ENCODE measurements at regions of chr17 and their contacts with region 1.

Region 1: DNA sequence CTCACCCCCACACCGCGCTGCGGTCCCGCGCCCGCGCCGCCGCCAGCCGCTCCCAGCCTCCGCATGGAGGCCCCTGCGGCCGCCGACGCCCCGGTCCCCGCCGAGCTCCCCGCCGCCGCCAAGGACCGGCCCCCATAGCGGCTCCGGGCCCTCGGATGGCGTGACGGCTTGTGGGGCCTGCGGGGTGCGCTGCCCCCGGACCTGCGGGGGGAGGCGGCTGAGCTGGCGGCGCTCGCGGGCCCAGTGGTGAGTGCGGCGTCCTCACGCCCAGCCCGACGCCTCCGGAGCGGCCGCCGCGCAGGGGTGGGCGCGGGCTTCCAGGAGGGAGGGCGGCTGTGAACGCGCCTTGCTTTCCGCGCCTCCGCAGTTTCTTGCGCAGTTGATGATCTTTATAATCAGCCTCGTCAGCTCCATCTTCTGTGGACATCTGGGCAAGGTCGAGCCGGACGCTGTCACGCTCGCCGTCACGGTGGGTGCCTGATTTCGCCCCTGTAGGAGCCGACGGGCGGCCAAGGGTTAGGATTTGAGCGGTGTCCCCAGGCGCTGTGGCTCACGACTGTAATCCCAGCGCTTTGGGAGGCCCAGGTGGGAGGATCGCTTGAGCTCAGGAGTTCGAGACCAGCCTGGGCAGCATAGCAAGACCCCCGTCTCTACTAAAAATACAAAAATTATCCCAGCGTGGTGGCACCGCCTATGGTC is 46.4 kb downstream of the SLC47A1 start:
- DNase-seq: peak; percentile 29 to 72 (median 48)
- H3K4me3 ChIP-seq: peak overlapping the region; percentile 48
- H3K27ac ChIP-seq: peak overlapping the region; percentile 49 to 50
- H3K4me1 ChIP-seq: peaks cover 4% of the 10 kb centered on the region
- H3K27me3 ChIP-seq: no peaks in the 10 kb centered on the region
- CTCF ChIP-seq: no peak
- EP300 ChIP-seq: no peak
- POLR2A ChIP-seq: no peak

Region 2: GRCh38 chr17:19533718-19534561 is 46.1 kb before region 1 on chr17 and contains the start of gene SLC47A1:
- intact Hi-C with region 1: loop called in 1 of 4 experiments (anchors 5 kb)
- DNase-seq: peak in 1 of 5 donors; percentile 72
- H3K4me3 ChIP-seq: peak within 1 kb of the TSS; percentile 50
- H3K27ac ChIP-seq: no peak within 1 kb of the TSS
- H3K4me1 ChIP-seq: no peaks in the 10 kb centered on the region
- H3K27me3 ChIP-seq: no peaks in the 10 kb centered on the region
- CTCF ChIP-seq: no peak
- EP300 ChIP-seq: no peak
- POLR2A ChIP-seq: no peak
- total RNA-seq, gene SLC47A1: 5.0 to 25.8 (median 10.6) TPM

Region 3: GRCh38 chr17:19857640-19858039 is 277.6 kb after region 1 on chr17:
- intact Hi-C with region 1: no loop called
- DNase-seq: no peak
- H3K4me3 ChIP-seq: no peak overlapping the region
- H3K27ac ChIP-seq: no peak overlapping the region
- H3K4me1 ChIP-seq: no peaks in the 10 kb centered on the region
- H3K27me3 ChIP-seq: no peaks in the 10 kb centered on the region
- CTCF ChIP-seq: no peak
- EP300 ChIP-seq: no peak
- POLR2A ChIP-seq: no peak

Measured in ovary (tissue), 10 donors.